ENCODE measurements at regions of chr7 and their contacts with region 1.

Region 1: DNA sequence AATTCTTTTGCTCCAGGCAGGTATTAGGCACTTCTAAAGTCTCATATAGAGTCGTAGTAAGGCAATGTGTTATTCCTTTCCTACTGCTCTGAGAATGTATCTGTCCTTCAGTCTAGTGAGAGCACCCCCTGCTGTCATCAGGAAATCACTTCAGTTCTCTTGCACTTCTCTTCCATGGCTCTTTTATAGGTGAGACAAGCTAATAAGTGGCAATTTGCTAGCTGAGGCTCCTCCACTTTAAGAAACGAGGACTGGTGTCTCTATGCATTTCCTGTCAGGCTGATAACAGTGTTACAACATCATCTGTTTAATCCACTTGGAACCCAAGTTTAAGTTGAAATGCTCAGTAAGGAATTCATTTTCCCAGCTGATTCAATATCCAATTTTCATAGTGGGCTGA is 350.6 kb downstream of the TFEC start:
- DNase-seq: peak; percentile 22
- ATAC-seq: no peak
- H3K4me3 ChIP-seq: no peak overlapping the region
- H3K27ac ChIP-seq: no peak overlapping the region
- H3K4me1 ChIP-seq: peaks cover 3% of the 10 kb centered on the region; the same call in 1 of the 2 replicates
- H3K27me3 ChIP-seq: no peaks in the 10 kb centered on the region
- CTCF ChIP-seq: peak; percentile 63

Region 2: DNA sequence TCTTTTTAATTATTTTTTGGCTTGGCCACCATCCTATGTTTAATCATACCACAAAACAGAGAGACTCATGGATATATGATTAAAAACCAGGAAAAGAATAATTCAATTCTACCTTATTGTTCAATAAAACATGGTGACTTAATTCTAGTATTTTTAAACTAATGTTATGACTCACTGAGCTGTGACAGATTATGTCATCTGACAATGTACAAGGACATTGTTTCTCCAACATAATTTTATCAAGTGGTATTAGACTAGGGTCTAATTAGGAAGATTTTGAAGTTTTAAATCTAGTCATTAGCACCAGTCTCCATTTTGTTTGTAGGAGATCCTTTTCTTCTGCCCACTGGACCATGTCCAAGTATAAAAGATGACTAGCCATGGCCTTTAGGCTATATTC is 957.4 kb before region 1 on chr7:
- CTCF ChIA-PET with region 1: no interaction called
- POLR2A ChIA-PET with region 1: no interaction called
- in situ Hi-C with region 1: no loop called
- intact Hi-C with region 1: no loop called
- DNase-seq: no peak
- ATAC-seq: no peak
- H3K4me3 ChIP-seq: no peak overlapping the region
- H3K27ac ChIP-seq: no peak overlapping the region
- H3K4me1 ChIP-seq: no peaks in the 10 kb centered on the region
- H3K27me3 ChIP-seq: no peaks in the 10 kb centered on the region
- CTCF ChIP-seq: no peak

Region 3: DNA sequence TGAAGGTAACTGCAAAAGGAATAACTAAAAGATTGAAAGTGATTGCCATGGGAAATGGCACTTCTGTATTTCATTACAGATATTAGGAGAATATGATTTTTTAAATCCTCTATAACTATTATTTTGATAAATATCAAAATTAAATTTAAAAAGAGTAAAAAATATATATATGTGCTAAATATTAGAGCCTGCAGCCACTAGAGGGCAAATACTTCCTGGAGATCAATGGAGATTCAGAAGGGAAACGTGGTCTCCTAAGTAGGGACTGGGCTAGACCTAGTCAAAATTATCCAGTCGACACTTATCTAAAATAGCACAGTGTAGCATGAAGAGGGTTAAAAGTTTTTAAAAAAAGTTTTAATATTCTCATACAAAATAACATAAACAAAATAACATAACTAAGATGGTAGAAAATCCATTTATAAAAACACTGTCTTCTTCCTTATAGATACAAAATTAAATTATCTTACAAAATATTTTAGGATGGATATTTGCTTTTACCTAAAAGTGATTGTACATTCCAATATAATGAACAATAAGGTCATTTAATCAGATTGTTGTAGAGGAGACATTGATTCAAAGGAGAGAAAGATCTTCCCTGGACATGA is 323.7 kb before region 1 on chr7:
- CTCF ChIA-PET with region 1: interaction called, 3 read pairs
- POLR2A ChIA-PET with region 1: no interaction called
- in situ Hi-C with region 1: no loop called
- intact Hi-C with region 1: loop called (anchors 10 kb)
- DNase-seq: no peak
- ATAC-seq: no peak
- H3K4me3 ChIP-seq: no peak overlapping the region
- H3K27ac ChIP-seq: no peak overlapping the region
- H3K4me1 ChIP-seq: no peaks in the 10 kb centered on the region
- H3K27me3 ChIP-seq: no peaks in the 10 kb centered on the region
- CTCF ChIP-seq: peak; percentile 49; the same call in 1 of the 2 replicates